Activated B cell treated with CpG ODN at 0.5 μM for 24 hours (primary cell): ENCODE measurements at regions of chr16 and their contacts with region 1.

Region 1: DNA sequence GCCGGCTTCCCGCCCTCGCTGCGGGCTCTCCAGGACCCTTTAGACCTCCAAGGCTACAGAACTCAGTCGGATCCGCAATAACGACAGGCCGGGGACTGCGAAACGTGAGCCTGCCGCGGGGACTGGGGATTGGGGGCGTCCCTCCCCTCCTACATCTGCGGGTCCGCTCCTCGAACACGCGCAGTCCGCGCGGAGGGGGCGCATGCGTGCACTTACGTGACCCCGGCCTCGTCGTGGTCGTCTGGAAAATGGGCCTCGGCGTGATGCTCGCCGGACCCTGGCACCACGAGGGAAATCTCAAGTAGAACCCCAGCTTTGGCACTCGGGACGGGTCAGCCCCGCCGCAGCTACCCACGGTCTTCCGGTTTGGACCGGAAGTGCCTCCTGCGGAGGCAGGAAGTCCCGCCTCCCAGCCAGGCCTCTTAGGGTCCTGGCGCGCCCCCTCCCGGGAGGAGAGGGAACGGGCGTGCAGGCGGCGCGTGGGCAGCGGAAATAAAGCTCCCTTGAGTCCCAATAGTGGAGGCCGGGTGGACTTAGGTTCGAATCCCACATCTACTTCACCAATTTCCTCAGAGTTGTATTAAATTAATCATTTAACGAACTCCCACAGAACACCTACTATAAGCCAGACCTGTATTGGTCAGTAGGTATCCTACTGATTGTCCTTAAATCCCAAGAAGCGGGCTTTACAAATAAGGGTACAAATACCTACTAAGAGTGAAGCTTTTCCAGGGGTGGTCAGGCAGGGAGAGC is at the start of gene TAF1C:
- DNase-seq: peak; percentile 93
- ATAC-seq: peak; percentile 99
- H3K4me3 Mint-ChIP-seq: peak within 1 kb of the TSS; percentile 92
- H3K27ac Mint-ChIP-seq: peak within 1 kb of the TSS; percentile 89
- H3K4me1 Mint-ChIP-seq: peaks cover 18% of the 10 kb centered on the region
- H3K27me3 Mint-ChIP-seq: no peaks in the 10 kb centered on the region
- CTCF ChIP-seq: peak; percentile 40
- total RNA-seq, gene TAF1C: 79.6 and 85.1 TPM in 2 replicates

Region 2: GRCh38 chr16:83826146-83826913 is 360.5 kb before region 1 on chr16:
- CTCF ChIA-PET with region 1: interaction called, 3 read pairs
- POLR2A ChIA-PET with region 1: no interaction called
- intact Hi-C with region 1: loop called (anchors 5 kb)
- DNase-seq: peak; percentile 78
- ATAC-seq: peak; percentile 94
- H3K4me3 Mint-ChIP-seq: no peak overlapping the region
- H3K27ac Mint-ChIP-seq: no peak overlapping the region
- H3K4me1 Mint-ChIP-seq: peaks cover 7% of the 10 kb centered on the region
- H3K27me3 Mint-ChIP-seq: peaks cover 5% of the 10 kb centered on the region
- CTCF ChIP-seq: peak; percentile 59

Region 3: DNA sequence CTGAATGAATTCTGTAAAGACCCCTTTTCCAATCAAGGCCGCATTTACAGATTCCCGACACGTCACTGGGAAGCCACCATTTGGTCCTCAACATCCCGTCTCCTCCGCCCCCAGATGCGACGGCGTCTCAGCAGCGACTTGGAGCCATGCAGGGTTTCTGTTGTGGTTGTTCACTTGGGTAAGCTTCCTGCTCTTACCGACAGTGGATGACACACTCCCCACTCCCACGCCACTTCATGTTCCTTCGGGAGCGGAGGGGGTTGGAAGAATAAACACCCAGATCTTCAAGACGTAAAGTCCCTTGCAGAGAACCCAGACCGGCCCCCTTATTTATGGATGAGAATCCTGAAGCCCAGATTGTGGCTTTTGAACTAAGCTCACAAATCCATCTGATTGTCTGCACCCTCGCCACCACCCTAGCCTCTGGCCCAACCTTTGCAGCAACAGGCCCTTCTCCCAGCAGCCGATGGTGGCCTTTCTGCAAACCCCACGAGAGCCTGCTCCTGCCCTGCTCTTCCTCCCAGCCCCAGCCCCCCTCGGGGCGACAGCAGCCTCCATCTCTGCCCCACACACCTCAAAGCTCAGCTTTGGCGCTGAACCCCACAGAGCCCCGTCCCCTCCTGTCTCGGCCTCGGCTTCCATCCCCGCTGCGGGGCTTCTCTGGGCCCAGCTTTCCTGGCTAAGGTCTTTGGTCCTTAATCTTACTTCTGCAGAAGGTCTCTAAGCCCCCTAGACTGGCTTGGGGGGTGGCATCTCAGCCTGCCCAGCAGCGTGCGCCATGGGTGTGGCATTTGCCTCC is 252.8 kb before region 1 on chr16:
- CTCF ChIA-PET with region 1: no interaction called
- POLR2A ChIA-PET with region 1: no interaction called
- intact Hi-C with region 1: no loop called
- DNase-seq: no peak
- ATAC-seq: no peak
- H3K4me3 Mint-ChIP-seq: no peak overlapping the region
- H3K27ac Mint-ChIP-seq: no peak overlapping the region
- H3K4me1 Mint-ChIP-seq: no peaks in the 10 kb centered on the region
- H3K27me3 Mint-ChIP-seq: no peaks in the 10 kb centered on the region
- CTCF ChIP-seq: no peak

Region 4: GRCh38 chr16:83952940-83953795 is 233.7 kb before region 1 on chr16 and contains the start of gene OSGIN1:
- CTCF ChIA-PET with region 1: interaction called, 5 read pairs
- POLR2A ChIA-PET with region 1: no interaction called
- intact Hi-C with region 1: loop called (anchors 1 kb)
- DNase-seq: peak; percentile 58
- ATAC-seq: peak; percentile 88
- H3K4me3 Mint-ChIP-seq: peak within 1 kb of the TSS; percentile 77
- H3K27ac Mint-ChIP-seq: no peak within 1 kb of the TSS
- H3K4me1 Mint-ChIP-seq: peaks cover 8% of the 10 kb centered on the region
- H3K27me3 Mint-ChIP-seq: peaks cover 20% of the 10 kb centered on the region
- CTCF ChIP-seq: no peak
- total RNA-seq, gene OSGIN1: 1.6 TPM in 2 replicates

Region 5: DNA sequence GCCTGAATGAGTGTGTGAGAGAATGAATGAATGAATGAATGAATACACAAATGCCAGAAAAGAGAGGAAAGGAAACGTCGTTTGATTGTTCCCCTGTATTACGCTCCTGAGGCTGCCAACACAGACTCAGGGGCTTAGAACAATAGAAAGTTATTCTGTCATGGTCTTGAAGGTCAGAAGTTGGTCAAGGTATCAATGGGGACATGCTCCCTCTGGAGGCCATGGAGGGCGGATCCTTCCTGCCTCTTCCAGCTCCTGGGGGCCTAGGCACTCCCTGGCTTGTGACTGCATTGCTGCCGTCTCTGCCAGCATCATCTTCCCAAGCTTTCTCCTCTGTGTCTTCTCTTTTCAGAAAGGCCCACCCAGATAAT is 142.8 kb before region 1 on chr16:
- CTCF ChIA-PET with region 1: no interaction called
- POLR2A ChIA-PET with region 1: no interaction called
- intact Hi-C with region 1: no loop called
- DNase-seq: no peak
- ATAC-seq: no peak
- H3K4me3 Mint-ChIP-seq: no peak overlapping the region
- H3K27ac Mint-ChIP-seq: no peak overlapping the region
- H3K4me1 Mint-ChIP-seq: no peaks in the 10 kb centered on the region
- H3K27me3 Mint-ChIP-seq: peaks cover 18% of the 10 kb centered on the region
- CTCF ChIP-seq: no peak

Region 6: GRCh38 chr16:84116720-84117493 is 70.0 kb before region 1 on chr16 and contains the start of gene MBTPS1:
- CTCF ChIA-PET with region 1: interaction called, 11 read pairs
- POLR2A ChIA-PET with region 1: interaction called, 20 read pairs
- intact Hi-C with region 1: no loop called
- DNase-seq: peak; percentile 99
- ATAC-seq: peak; percentile 91
- H3K4me3 Mint-ChIP-seq: peak within 1 kb of the TSS; percentile 92
- H3K27ac Mint-ChIP-seq: peak within 1 kb of the TSS; percentile 89
- H3K4me1 Mint-ChIP-seq: peaks cover 25% of the 10 kb centered on the region
- H3K27me3 Mint-ChIP-seq: no peaks in the 10 kb centered on the region
- CTCF ChIP-seq: no peak
- total RNA-seq, gene MBTPS1: 74.1 and 79.2 TPM in 2 replicates

Region 7: DNA sequence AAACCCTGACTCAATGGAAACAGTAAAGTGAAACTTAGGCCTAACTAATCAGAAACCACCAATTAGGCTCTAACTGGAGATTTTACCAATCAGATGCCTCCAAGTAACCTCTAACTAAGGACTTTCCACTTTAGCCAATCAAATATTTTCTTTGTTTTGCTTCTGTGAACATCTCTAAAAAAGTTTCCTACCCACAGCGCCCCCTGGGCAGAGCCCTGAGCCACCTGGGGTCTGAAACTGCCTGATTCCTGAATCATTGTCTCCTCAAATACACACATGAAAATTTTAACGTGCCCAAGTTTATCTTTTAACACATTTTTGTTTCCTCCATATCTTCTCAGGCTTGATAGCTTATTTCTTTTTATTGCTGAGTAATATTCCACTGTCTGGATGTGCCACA is 23.1 kb after region 1 on chr16:
- CTCF ChIA-PET with region 1: no interaction called
- POLR2A ChIA-PET with region 1: no interaction called
- intact Hi-C with region 1: no loop called
- DNase-seq: no peak
- ATAC-seq: no peak
- H3K4me3 Mint-ChIP-seq: no peak overlapping the region
- H3K27ac Mint-ChIP-seq: no peak overlapping the region
- H3K4me1 Mint-ChIP-seq: no peaks in the 10 kb centered on the region
- H3K27me3 Mint-ChIP-seq: no peaks in the 10 kb centered on the region
- CTCF ChIP-seq: no peak

Region 8: GRCh38 chr16:84504420-84505248 is 317.8 kb after region 1 on chr16 and contains the start of gene MEAK7:
- CTCF ChIA-PET with region 1: interaction called, 6 read pairs
- POLR2A ChIA-PET with region 1: interaction called, 3 read pairs
- intact Hi-C with region 1: loop called (anchors 1 kb)
- DNase-seq: peak; percentile 97
- ATAC-seq: peak; percentile 96
- H3K4me3 Mint-ChIP-seq: peak within 1 kb of the TSS; percentile 88
- H3K27ac Mint-ChIP-seq: peak within 1 kb of the TSS; percentile 91
- H3K4me1 Mint-ChIP-seq: peaks cover 56% of the 10 kb centered on the region
- H3K27me3 Mint-ChIP-seq: no peaks in the 10 kb centered on the region
- CTCF ChIP-seq: no peak
- total RNA-seq, gene MEAK7: 9.8 and 15.0 TPM in 2 replicates

Region 9: DNA sequence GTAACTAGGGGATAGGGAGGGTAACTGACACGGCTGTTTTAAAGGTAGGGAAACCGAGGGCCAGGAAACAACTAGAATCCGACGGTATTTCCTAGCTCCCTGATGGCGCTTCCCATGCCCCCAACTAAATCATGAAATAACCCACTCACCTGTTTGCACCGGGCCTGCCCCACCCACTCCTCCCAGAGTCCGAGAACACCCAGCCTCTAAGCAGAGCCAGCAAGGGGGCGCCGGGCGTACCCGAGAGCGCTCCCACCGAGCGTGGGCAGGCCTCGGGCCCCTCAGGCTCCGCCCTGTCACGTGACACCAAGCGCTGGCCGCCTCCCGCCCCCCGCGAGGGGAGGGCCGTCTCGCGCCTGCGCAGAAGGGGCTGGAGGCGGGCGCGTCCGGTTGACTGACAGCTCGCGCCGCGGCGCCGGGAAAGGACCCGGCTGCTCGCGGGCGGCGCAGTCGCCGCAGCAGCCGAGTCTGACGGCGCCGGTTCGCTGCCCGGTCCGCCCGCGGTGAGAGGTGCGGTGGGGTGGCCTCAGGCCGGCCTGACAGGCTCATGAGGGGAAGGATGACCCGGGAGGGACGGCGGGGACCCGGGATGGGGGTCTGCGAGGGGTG is 840.6 kb after region 1 on chr16 and contains the start of gene KIAA0513:
- CTCF ChIA-PET with region 1: no interaction called
- POLR2A ChIA-PET with region 1: no interaction called
- intact Hi-C with region 1: loop called (anchors 5 kb)
- DNase-seq: peak; percentile 99
- ATAC-seq: peak; percentile 87
- H3K4me3 Mint-ChIP-seq: peak within 1 kb of the TSS; percentile 89
- H3K27ac Mint-ChIP-seq: peak within 1 kb of the TSS; percentile 88
- H3K4me1 Mint-ChIP-seq: peaks cover 42% of the 10 kb centered on the region
- H3K27me3 Mint-ChIP-seq: peaks cover 11% of the 10 kb centered on the region
- CTCF ChIP-seq: no peak
- total RNA-seq, gene KIAA0513: 0.62 and 1.1 TPM in 2 replicates

Region 10: GRCh38 chr16:85086347-85087291 is 899.8 kb after region 1 on chr16:
- CTCF ChIA-PET with region 1: no interaction called
- POLR2A ChIA-PET with region 1: no interaction called
- intact Hi-C with region 1: no loop called
- DNase-seq: peak; percentile 54
- ATAC-seq: peak; percentile 83
- H3K4me3 Mint-ChIP-seq: no peak overlapping the region
- H3K27ac Mint-ChIP-seq: no peak overlapping the region
- H3K4me1 Mint-ChIP-seq: peaks cover 27% of the 10 kb centered on the region
- H3K27me3 Mint-ChIP-seq: peaks cover 17% of the 10 kb centered on the region
- CTCF ChIP-seq: no peak